GM12878 (cell line): ENCODE measurements at regions of chr3 and their contacts with region 1.

Region 1: DNA sequence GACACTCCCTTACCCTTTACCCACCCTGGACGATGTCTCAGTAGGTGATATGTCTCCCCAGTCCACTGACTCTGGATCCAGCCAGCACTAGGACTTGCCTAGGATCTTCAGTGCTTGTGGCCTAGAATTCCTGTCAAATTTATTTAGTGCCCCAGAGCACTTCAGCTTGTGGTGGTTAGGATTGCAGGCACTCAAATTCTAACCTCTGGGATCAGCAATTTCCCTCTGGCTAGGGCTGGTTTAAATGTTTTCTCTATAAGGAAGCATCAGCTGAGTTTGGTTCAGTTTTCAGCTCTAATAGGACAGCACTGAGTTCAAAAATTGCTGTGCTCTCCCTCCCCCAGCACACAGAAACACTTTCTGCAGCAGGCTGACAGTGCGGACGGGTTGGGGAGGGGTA is 8.1 kb downstream of the OR5H6 start:
- DNase-seq: no peak
- ATAC-seq: no peak
- H3K4me3 ChIP-seq: no peak overlapping the region
- H3K27ac ChIP-seq: no peak overlapping the region
- H3K4me1 ChIP-seq: no peaks in the 10 kb centered on the region
- H3K27me3 ChIP-seq: no peaks in the 10 kb centered on the region
- CTCF ChIP-seq: no peak
- EP300 ChIP-seq: no peak
- POLR2A ChIP-seq: no peak
- RAD21 ChIP-seq: no peak

Region 2: DNA sequence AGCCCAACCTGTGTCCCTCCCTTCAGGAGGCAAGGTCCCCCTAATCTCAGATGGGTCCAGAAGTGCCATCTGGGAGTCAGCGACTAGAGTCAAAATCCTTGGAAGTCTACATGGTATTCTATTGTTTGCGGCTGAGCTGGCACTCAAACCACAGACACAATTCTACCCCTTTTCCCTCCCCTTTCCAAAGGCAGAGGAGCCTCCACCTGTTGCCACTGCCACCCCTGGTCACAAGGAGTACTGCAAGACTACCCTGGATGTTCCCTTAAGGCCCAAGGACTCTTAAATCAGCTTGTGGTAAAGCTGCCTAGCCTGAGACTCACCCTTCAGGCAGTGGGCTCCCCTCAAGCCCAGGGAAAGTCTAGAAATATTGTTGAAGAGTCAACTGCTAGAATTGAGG is 12.4 kb before region 1 on chr3:
- CTCF ChIA-PET with region 1: interaction called, 4 read pairs
- POLR2A ChIA-PET with region 1: no interaction called
- RAD21 ChIA-PET with region 1: no interaction called
- SMC1A ChIA-PET with region 1: interaction called, 10 read pairs
- in situ Hi-C with region 1: no loop called
- intact Hi-C with region 1: no loop called
- DNase-seq: no peak
- ATAC-seq: peak; percentile 82
- H3K4me3 ChIP-seq: no peak overlapping the region
- H3K27ac ChIP-seq: no peak overlapping the region
- H3K4me1 ChIP-seq: no peaks in the 10 kb centered on the region
- H3K27me3 ChIP-seq: no peaks in the 10 kb centered on the region
- CTCF ChIP-seq: peak in 2 of 3 experiments; percentile 29 to 44; a peak in 3 of 6 replicates
- EP300 ChIP-seq: no peak
- POLR2A ChIP-seq: no peak
- RAD21 ChIP-seq: no peak

Region 3: GRCh38 chr3:98333989-98334606 is 62.0 kb after region 1 on chr3:
- CTCF ChIA-PET with region 1: no interaction called
- POLR2A ChIA-PET with region 1: no interaction called
- RAD21 ChIA-PET with region 1: no interaction called
- SMC1A ChIA-PET with region 1: no interaction called
- in situ Hi-C with region 1: no loop called
- intact Hi-C with region 1: no loop called
- DNase-seq: no peak
- ATAC-seq: no peak
- H3K4me3 ChIP-seq: no peak overlapping the region
- H3K27ac ChIP-seq: no peak overlapping the region
- H3K4me1 ChIP-seq: no peaks in the 10 kb centered on the region; the same call in 1 of the 2 replicates
- H3K27me3 ChIP-seq: no peaks in the 10 kb centered on the region
- CTCF ChIP-seq: no peak
- EP300 ChIP-seq: no peak
- POLR2A ChIP-seq: no peak
- RAD21 ChIP-seq: no peak

Region 4: GRCh38 chr3:98846101-98846500 is 574.0 kb after region 1 on chr3:
- CTCF ChIA-PET with region 1: no interaction called
- POLR2A ChIA-PET with region 1: no interaction called
- RAD21 ChIA-PET with region 1: no interaction called
- SMC1A ChIA-PET with region 1: no interaction called
- in situ Hi-C with region 1: no loop called
- intact Hi-C with region 1: no loop called
- DNase-seq: no peak
- ATAC-seq: no peak
- H3K4me3 ChIP-seq: no peak overlapping the region
- H3K27ac ChIP-seq: no peak overlapping the region
- H3K4me1 ChIP-seq: no peaks in the 10 kb centered on the region
- H3K27me3 ChIP-seq: no peaks in the 10 kb centered on the region
- CTCF ChIP-seq: no peak
- EP300 ChIP-seq: no peak
- POLR2A ChIP-seq: no peak
- RAD21 ChIP-seq: no peak